Right cardiac atrium (tissue), 5 donors: ENCODE measurements at regions of chr7 and their contacts with region 1.

Region 1: DNA sequence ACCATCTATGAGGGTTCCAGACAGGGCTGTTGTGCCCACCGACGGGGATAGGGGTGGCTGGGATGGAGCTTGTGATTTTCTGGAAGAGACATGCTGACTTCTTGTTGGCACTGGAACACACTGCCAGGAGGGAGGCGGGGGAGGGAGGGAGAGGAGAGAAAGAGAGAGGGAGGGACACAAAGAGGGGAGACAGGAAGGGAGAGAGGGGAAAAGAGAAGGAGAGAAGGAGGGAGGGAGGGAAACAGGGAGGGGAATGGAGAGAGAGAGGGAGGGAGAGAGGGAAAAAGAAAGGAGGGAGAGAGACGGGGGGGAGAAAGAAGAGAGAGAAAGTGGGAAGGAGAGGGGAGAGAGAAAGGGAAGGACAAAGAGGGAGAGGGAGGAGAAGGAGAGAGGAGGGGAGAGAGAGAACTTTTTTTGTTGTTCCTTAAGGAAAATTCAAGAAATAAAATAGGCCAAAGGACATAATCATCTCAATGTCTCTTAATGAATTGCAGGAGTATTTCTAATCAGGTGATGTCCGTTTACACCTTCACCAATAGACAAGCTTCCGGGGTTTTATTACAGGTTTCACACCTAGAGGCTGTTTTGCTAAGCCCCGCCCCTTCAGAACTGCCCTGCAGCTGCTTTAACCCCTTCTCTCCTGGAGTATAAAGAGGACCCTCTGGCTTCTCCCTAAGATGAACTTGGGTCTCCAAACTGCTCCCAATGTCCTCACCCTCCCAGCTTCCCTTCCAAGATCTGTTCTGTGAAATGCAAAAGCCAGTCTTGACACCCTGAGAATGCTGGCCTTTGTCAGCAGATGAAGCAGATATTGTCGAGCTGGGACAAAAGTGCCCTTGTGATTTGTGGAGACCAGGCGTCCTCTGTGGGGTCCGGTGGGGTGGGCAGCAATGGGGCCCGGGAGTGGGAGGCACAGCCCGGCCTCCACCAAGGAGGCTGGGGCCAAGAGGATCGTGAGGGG is 82.0 kb upstream of the GTF2IRD1 start:
- DNase-seq: peak in 1 of 3 donors; percentile 69
- ATAC-seq: peak; percentile 22 to 32
- H3K4me3 ChIP-seq: no peak overlapping the region
- H3K27ac ChIP-seq: no peak overlapping the region
- H3K4me1 ChIP-seq: no peaks in the 10 kb centered on the region
- H3K27me3 ChIP-seq: no peaks in the 10 kb centered on the region

Region 2: GRCh38 chr7:74289659-74290514 is 81.8 kb before region 1 on chr7:
- intact Hi-C with region 1: loop called in 1 of 4 experiments (anchors 10 kb)
- DNase-seq: peak; percentile 59 to 86 (median 82)
- ATAC-seq: peak; percentile 30 to 31
- H3K4me3 ChIP-seq: peak overlapping the region; percentile 96
- H3K27ac ChIP-seq: no peak overlapping the region
- H3K4me1 ChIP-seq: peaks cover 6% of the 10 kb centered on the region
- H3K27me3 ChIP-seq: no peaks in the 10 kb centered on the region

Region 3: DNA sequence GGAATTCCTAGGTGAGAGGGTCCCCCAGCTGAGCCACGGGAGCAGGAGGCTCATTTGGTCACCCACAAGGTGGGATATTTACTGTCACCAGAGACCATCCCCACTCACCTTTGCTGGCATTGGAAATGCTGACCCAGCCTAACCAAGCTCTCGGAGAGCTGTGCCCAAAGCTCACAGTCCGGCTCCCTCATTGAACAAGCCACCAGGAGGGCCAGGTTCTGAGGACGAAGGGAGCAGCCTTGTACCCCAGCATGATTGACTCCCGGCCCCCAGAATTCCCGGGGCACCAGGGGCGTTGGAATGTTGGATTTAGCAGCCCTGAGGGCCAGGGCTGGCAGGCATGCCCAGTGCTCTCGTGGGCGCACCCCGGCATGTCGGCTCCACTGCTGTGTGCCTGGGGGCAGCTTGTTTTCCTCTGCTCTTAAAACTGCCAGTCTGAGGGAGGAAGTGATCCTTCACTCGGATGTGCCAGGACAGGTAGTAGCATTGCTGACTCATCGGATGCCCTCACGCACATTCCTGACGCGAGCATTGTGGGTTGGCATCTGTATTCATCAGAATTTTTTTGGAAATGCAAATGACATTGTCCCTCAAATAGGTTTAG is 59.1 kb before region 1 on chr7:
- intact Hi-C with region 1: loop called in 1 of 4 experiments (anchors 10 kb)
- DNase-seq: no peak
- ATAC-seq: no peak
- H3K4me3 ChIP-seq: no peak overlapping the region
- H3K27ac ChIP-seq: no peak overlapping the region
- H3K4me1 ChIP-seq: no peaks in the 10 kb centered on the region
- H3K27me3 ChIP-seq: no peaks in the 10 kb centered on the region